Sciatic nerve (tissue), 2 donors: ENCODE measurements at regions of chr12 and their contacts with region 1.

Region 1: DNA sequence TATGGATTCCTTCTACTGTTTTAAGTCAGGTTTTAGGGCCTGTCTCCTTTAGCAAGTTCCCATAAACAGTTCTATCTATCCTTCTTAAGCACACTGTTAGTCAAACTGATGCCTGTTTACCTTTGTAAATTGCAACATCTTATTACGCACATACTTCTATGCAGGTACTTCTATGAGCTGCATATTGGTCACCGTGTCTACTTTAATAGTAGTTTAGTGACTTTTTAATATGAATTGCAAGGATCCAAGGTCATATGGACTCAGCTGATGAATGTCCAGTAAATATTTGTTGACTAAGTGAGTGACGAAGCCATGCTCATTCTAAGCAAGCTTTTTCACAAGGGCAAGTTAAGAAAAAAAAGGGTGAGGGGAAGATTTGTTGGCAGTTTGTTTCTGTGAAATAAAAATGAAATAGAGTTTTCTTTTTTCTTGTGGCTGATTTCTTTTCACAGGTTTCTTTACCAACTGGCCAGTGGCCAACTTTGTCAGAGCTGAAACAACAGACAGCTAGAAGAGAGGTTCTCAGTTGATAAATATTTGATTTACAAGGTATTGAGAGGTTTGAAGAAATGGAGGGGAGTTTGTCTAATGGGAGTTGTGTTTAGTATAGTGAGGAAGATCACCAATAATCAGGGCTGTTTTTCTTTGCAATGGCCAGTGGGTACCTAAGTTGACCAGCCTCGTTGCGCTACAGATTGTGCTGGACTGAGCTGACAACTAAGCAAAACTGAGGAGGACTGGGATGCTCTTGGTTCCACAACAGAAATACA is 141.1 kb downstream of the SLC15A5 start:
- DNase-seq: no peak
- ATAC-seq: no peak

Region 2: GRCh38 chr12:14836302-14837210 is 1299.8 kb before region 1 on chr12:
- intact Hi-C with region 1: no loop called
- DNase-seq: no peak
- ATAC-seq: no peak

Region 3: GRCh38 chr12:16158050-16158449 is 21.6 kb after region 1 on chr12:
- intact Hi-C with region 1: loop called (anchors 1 kb)
- DNase-seq: no peak
- ATAC-seq: no peak